Heart right ventricle (tissue), 16 donors: ENCODE measurements at regions of chr4 and their contacts with region 1.

Region 1: DNA sequence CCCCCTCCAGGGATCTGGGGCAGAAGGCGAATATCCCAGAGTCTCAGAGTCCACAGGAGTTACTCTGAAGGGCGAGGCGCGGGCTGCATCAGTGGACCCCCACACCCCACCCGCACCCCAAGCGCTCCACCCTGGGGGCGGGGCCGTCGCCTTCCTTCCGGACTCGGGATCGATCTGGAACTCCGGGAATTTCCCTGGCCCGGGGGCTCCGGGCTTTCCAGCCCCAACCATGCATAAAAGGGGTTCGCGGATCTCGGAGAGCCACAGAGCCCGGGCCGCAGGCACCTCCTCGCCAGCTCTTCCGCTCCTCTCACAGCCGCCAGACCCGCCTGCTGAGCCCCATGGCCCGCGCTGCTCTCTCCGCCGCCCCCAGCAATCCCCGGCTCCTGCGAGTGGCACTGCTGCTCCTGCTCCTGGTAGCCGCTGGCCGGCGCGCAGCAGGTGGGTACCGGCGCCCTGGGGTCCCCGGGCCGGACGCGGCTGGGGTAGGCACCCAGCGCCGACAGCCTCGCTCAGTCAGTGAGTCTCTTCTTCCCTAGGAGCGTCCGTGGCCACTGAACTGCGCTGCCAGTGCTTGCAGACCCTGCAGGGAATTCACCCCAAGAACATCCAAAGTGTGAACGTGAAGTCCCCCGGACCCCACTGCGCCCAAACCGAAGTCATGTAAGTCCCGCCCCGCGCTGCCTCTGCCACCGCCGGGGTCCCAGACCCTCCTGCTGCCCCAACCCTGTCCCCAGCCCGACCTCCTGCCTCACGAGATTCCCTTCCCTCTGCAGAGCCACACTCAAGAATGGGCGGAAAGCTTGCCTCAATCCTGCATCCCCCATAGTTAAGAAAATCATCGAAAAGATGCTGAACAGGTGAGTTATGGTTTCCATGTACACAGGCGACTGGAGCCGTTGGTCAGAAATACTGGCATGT is at the start of gene CXCL1:
- DNase-seq: peak; percentile 16 to 56
- ATAC-seq: peak; percentile 62 to 83 (median 73)
- H3K4me3 ChIP-seq: peak within 1 kb of the TSS; percentile 36 to 75 (median 62)
- H3K27ac ChIP-seq: peak within 1 kb of the TSS in 8 of 10 donors; percentile 28 to 91 (median 64)
- H3K4me1 ChIP-seq: peaks cover 0 to 31% (median 12%) of the 10 kb centered on the region in 9 donors
- H3K27me3 ChIP-seq: peaks cover 0 to 19% (median 5%) of the 10 kb centered on the region in 7 donors
- CTCF ChIP-seq: no peak
- total RNA-seq, gene CXCL1: 0.30 to 15.0 (median 1.3) TPM

Region 2: GRCh38 chr4:73762409-73762808 is 107.0 kb before region 1 on chr4:
- intact Hi-C with region 1: loop called in 1 of 10 experiments (anchors 10 kb)
- DNase-seq: no peak
- ATAC-seq: no peak
- H3K4me3 ChIP-seq: no peak overlapping the region
- H3K27ac ChIP-seq: no peak overlapping the region
- H3K4me1 ChIP-seq: peaks cover 0 to 21% (median 0%) of the 10 kb centered on the region in 9 donors
- H3K27me3 ChIP-seq: no peaks in the 10 kb centered on the region
- CTCF ChIP-seq: no peak

Region 3: GRCh38 chr4:74189331-74190043 is 320.1 kb after region 1 on chr4:
- intact Hi-C with region 1: no loop called
- DNase-seq: no peak
- ATAC-seq: no peak
- H3K4me3 ChIP-seq: no peak overlapping the region
- H3K27ac ChIP-seq: no peak overlapping the region
- H3K4me1 ChIP-seq: no peaks in the 10 kb centered on the region
- H3K27me3 ChIP-seq: no peaks in the 10 kb centered on the region
- CTCF ChIP-seq: peak; percentile 27 to 81 (median 76)

Region 4: DNA sequence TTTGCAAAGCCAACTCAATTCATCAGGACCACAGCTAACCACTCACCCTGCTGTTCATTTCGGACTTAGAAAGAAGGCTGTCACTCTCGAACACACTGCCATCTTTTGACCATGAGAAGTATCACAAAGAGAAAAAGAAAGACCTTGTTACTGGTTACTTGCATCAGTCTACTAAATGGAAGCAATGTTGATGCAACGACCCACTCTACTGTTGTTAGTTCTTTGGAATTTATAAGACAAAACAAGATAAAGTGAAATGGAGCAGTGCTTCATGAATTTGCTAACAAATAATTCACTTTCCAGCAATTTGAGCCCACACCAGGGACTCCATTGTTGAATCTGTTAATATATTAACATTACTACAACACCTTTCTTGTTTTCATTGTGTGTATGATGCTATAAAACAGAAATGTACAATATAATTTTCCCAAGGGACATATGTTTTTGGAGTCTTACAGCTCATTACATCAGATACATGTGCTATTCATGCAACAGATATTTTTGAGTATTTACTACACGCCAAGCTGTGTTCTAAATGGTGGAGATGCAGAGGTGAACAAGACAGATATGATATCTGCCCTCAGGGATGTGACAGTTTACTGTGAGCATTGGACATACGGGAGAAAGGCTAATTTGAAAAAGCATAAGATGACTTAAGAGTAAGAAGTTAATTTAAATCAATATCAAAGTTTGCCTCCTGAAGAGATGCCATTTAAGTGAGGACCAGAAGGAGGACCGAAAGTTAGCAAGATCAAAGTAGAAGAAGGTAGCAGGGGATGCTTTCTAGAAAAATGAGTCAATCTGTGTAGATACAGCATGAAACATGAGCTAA is 662.8 kb after region 1 on chr4:
- intact Hi-C with region 1: no loop called
- DNase-seq: no peak
- ATAC-seq: peak in 5 of 8 donors; percentile 40 to 72 (median 68)
- H3K4me3 ChIP-seq: no peak overlapping the region
- H3K27ac ChIP-seq: no peak overlapping the region
- H3K4me1 ChIP-seq: peaks cover 0 to 21% (median 7%) of the 10 kb centered on the region in 9 donors
- H3K27me3 ChIP-seq: peaks cover 0 to 5% (median 0%) of the 10 kb centered on the region in 7 donors
- CTCF ChIP-seq: peak; percentile 9 to 72 (median 60)

Region 5: DNA sequence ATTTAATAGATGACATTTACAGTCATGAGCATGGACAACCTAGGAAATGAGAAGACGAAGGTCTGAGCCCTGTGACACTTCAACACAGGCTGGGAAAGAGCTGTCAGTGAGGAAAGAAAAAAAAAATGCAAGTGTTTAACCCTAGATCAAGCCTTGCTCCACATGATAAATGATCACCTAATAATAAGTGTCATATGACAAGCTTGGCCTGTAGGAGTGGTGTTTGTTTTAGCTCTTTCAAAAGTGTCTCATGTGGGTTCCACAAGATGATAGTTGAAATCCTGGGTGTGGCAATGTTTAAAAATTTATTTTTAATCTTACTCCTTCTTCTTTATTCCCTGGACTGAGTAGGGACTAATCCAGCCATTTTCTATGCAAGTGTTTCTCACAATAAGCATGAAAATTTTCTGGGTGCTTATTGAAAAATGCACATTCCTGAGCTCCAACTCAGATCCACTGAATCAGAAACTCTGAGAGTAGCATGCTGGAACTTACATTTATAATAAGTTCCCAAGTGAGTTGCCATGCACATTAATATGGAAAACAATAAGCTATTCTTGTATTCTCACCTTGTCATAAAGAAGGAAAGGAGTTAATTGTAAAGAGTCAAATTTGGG is 713.8 kb after region 1 on chr4:
- intact Hi-C with region 1: no loop called
- DNase-seq: no peak
- ATAC-seq: no peak
- H3K4me3 ChIP-seq: no peak overlapping the region
- H3K27ac ChIP-seq: no peak overlapping the region
- H3K4me1 ChIP-seq: no peaks in the 10 kb centered on the region
- H3K27me3 ChIP-seq: no peaks in the 10 kb centered on the region
- CTCF ChIP-seq: no peak